Adrenal gland (tissue), 19 donors: ENCODE measurements at regions of chr20 and their contacts with region 1.

Region 1: GRCh38 chr20:33299111-33299603 is 16.1 kb downstream of the BPIFB1 start:
- DNase-seq: peak; percentile 55 to 72 (median 64)
- H3K4me3 ChIP-seq: no peak overlapping the region
- H3K27ac ChIP-seq: no peak overlapping the region
- H3K4me1 ChIP-seq: peaks cover 4 to 8% of the 10 kb centered on the region in 2 donors
- H3K27me3 ChIP-seq: no peaks in the 10 kb centered on the region
- CTCF ChIP-seq: peak; percentile 78 to 94 (median 84)
- POLR2A ChIP-seq: no peak

Region 2: DNA sequence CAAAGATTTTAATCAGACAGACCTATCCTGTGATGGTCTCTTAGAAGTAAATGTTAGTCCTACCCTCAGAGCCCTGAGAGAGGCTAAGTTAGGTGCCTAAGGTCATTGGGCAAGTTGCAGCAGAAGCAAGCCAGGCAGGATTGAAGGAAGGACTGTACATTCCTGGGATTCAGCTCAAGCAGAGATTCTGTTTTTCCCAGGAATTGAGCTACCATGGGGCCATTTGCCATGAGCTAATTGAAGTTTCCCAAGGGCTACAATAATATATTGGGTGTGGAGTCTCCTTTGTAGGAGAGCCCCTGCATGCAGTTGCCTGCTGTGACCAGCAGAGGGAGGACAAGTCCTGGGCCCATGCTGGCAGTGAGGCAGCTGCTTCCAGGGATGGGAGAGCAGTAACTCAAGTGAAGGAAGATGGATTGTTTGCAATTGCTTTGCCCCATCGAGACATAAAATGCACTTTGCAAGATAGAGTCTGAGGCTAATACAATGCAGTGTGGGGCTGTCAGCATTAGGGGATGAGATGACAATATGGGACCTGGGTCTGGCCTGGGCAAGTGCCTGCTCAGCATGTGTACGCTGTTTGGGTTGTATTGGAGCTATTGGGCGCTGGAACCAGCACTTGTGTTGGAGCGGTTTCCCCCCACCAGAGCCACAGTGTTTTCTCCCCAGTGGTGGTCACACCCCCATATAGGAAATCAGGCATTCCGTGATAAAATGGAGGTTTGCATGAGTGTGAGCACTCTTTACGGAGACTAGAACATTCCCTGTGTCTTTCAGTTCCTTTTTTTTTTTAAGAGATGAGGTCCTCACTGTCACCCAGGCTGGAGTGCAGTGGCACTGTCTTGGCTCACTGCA is 509.0 kb before region 1 on chr20:
- intact Hi-C with region 1: loop called (anchors 5 to 10 kb)
- DNase-seq: peak; percentile 74 to 87 (median 79)
- H3K4me3 ChIP-seq: no peak overlapping the region
- H3K27ac ChIP-seq: no peak overlapping the region
- H3K4me1 ChIP-seq: no peaks in the 10 kb centered on the region
- H3K27me3 ChIP-seq: no peaks in the 10 kb centered on the region
- CTCF ChIP-seq: peak; percentile 94 to 99 (median 96)
- POLR2A ChIP-seq: no peak

Region 3: GRCh38 chr20:32902456-32903420 is 396.4 kb before region 1 on chr20:
- intact Hi-C with region 1: loop called (anchors 2 to 10 kb)
- DNase-seq: peak; percentile 31 to 75 (median 53)
- H3K4me3 ChIP-seq: no peak overlapping the region
- H3K27ac ChIP-seq: no peak overlapping the region
- H3K4me1 ChIP-seq: no peaks in the 10 kb centered on the region
- H3K27me3 ChIP-seq: peaks cover 3% of the 10 kb centered on the region
- CTCF ChIP-seq: peak; percentile 78 to 95 (median 86)
- POLR2A ChIP-seq: no peak

Region 4: DNA sequence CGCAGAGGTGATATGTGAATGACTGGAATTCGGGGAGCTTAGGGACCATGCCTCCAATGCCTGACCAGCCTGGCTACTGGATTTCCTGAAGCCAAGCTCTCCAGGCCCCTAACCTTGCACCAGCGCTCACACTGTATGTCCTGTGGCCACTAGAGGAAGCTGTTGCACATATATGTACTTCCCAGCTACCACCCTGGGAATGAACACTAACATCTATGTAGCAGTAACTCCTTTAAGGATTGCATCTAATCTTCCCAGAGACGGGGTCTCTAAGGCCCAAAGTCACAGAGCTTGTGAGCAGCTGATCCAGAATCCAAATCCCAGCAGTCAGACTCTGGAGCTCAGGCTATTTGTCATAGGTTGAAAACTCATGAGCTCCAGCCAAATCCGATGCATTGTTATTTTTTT is 36.5 kb before region 1 on chr20:
- intact Hi-C with region 1: loop called in 1 of 2 experiments (anchors 5 kb)
- DNase-seq: peak; percentile 24 to 66 (median 58)
- H3K4me3 ChIP-seq: no peak overlapping the region
- H3K27ac ChIP-seq: no peak overlapping the region
- H3K4me1 ChIP-seq: no peaks in the 10 kb centered on the region
- H3K27me3 ChIP-seq: no peaks in the 10 kb centered on the region
- CTCF ChIP-seq: peak; percentile 52 to 75 (median 61)
- POLR2A ChIP-seq: no peak